ENCODE measurements at regions of chr15 and their contacts with region 1.

Region 1: GRCh38 chr15:66700802-66701421 is 1.1 kb upstream of the SMAD6 start:
- DNase-seq: peak; percentile 96
- ATAC-seq: peak; percentile 72
- H3K4me3 Mint-ChIP-seq: peak overlapping the region; percentile 98
- H3K27ac Mint-ChIP-seq: peak overlapping the region; percentile 80
- H3K4me1 Mint-ChIP-seq: peaks cover 16% of the 10 kb centered on the region
- H3K27me3 Mint-ChIP-seq: peaks cover 23% of the 10 kb centered on the region

Region 2: GRCh38 chr15:66654739-66655375 is 46.1 kb before region 1 on chr15:
- POLR2A ChIA-PET with region 1: interaction called, 12 read pairs
- DNase-seq: peak; percentile 71
- ATAC-seq: peak; percentile 73
- H3K4me3 Mint-ChIP-seq: peak overlapping the region; percentile 68
- H3K27ac Mint-ChIP-seq: peak overlapping the region; percentile 68
- H3K4me1 Mint-ChIP-seq: peaks cover 12% of the 10 kb centered on the region
- H3K27me3 Mint-ChIP-seq: peaks cover 3% of the 10 kb centered on the region

Region 3: DNA sequence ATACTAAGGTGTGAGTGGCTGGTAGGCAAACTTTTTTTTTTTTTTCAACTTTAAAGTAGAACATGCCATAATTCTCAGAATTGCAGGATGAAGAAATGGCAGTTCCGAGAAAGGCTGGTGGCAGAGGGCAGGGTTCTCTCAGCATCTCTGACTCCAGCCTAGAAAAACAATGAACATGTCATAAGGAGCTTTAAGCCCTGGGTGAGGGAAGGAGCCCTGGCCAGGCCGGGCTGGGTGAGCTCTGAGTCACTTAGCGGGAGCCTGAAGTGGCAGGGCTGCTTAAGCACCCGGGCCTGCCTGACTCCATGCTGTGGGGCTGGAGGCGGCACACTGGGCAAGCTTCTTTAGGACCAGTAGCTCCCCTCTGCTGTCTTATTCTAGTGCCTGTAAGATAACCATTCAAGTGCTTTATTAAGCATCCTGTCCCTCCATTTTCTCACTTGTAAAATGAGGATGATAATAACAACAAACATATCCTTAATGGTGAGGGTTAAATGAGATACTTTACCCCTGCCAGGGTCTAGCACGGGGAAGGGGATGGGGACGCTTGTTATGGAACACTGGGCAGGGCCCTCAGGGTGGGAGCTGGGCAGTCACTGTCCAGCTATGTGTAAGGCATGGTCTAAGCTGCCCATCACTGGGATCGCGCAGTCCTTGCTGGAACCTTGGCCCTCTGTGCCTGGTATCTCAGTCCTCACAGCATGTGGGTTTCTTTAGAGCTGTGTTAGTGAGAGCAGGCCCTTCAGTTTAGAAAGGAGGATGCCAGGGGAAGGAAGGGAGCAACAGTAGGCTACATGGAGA is 19.5 kb after region 1 on chr15:
- POLR2A ChIA-PET with region 1: interaction called, 42 read pairs
- DNase-seq: peak; percentile 56
- ATAC-seq: peak; percentile 92
- H3K4me3 Mint-ChIP-seq: peak overlapping the region; percentile 41
- H3K27ac Mint-ChIP-seq: peak overlapping the region; percentile 74
- H3K4me1 Mint-ChIP-seq: peaks cover 26% of the 10 kb centered on the region
- H3K27me3 Mint-ChIP-seq: no peaks in the 10 kb centered on the region